MCF 10A (cell line): ENCODE measurements at regions of chr16 and their contacts with region 1.

Region 1: GRCh38 chr16:67928561-67929364 is 2.9 kb downstream of the CTRL start:
- DNase-seq: peak; percentile 75
- H3K4me3 Mint-ChIP-seq: no peak overlapping the region
- H3K27ac Mint-ChIP-seq: no peak overlapping the region
- H3K4me1 Mint-ChIP-seq: peaks cover under 1% of the 10 kb centered on the region
- H3K27me3 Mint-ChIP-seq: no peaks in the 10 kb centered on the region
- CTCF ChIP-seq: peak; percentile 86

Region 2: GRCh38 chr16:67579686-67580085 is 349.1 kb before region 1 on chr16:
- CTCF ChIA-PET with region 1: no interaction called
- POLR2A ChIA-PET with region 1: no interaction called
- intact Hi-C with region 1: no loop called
- DNase-seq: no peak
- H3K4me3 Mint-ChIP-seq: no peak overlapping the region
- H3K27ac Mint-ChIP-seq: no peak overlapping the region
- H3K4me1 Mint-ChIP-seq: no peaks in the 10 kb centered on the region
- H3K27me3 Mint-ChIP-seq: no peaks in the 10 kb centered on the region
- CTCF ChIP-seq: no peak

Region 3: GRCh38 chr16:67708368-67708861 is 220.3 kb before region 1 on chr16:
- CTCF ChIA-PET with region 1: no interaction called
- POLR2A ChIA-PET with region 1: no interaction called
- intact Hi-C with region 1: no loop called
- DNase-seq: peak; percentile 30
- H3K4me3 Mint-ChIP-seq: no peak overlapping the region
- H3K27ac Mint-ChIP-seq: no peak overlapping the region
- H3K4me1 Mint-ChIP-seq: peaks cover 22% of the 10 kb centered on the region
- H3K27me3 Mint-ChIP-seq: no peaks in the 10 kb centered on the region
- CTCF ChIP-seq: no peak

Region 4: DNA sequence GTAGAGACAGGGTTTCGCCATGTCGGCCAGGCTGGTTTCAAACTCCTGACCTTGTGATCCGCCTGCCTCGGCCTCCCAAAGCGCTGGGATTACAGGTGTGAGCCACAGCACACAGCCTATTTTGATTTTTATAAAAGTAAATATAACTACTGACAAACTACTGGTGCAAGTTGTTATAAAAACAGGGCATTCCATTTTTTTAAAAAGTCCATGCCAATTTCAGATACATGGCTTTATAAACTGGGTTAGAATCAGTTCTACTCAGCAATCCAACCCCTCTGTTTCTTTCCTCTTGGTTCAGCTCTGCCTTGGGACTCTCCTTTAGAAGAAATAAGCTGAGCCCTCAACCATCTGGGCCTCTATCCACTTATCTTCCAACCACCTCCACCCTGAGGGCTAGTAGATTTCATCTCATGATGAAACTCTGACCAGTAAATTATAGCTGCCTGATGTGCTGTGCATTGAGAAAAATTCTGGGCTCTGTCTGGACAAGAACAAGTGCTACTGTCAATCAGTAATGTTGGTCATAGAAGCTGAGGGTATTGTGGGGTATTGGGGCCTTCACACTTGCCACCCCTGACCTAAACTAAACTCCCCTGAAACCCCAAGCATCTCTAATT is 132.6 kb before region 1 on chr16:
- CTCF ChIA-PET with region 1: no interaction called
- POLR2A ChIA-PET with region 1: no interaction called
- intact Hi-C with region 1: no loop called
- DNase-seq: no peak
- H3K4me3 Mint-ChIP-seq: no peak overlapping the region
- H3K27ac Mint-ChIP-seq: peak overlapping the region; percentile 39
- H3K4me1 Mint-ChIP-seq: peaks cover 15% of the 10 kb centered on the region
- H3K27me3 Mint-ChIP-seq: no peaks in the 10 kb centered on the region
- CTCF ChIP-seq: no peak

Region 5: GRCh38 chr16:67917852-67918236 is 10.9 kb before region 1 on chr16:
- CTCF ChIA-PET with region 1: interaction called, 12 read pairs
- POLR2A ChIA-PET with region 1: interaction called, 3 read pairs
- intact Hi-C with region 1: no loop called
- DNase-seq: peak; percentile 81
- H3K4me3 Mint-ChIP-seq: no peak overlapping the region
- H3K27ac Mint-ChIP-seq: peak overlapping the region; percentile 65
- H3K4me1 Mint-ChIP-seq: peaks cover 15% of the 10 kb centered on the region
- H3K27me3 Mint-ChIP-seq: no peaks in the 10 kb centered on the region
- CTCF ChIP-seq: no peak